Pancreas (tissue), 10 donors: ENCODE measurements at regions of chr1 and their contacts with region 1.

Region 1: GRCh38 chr1:156659994-156660751 is 17.0 kb downstream of the NES start:
- DNase-seq: peak; percentile 87 to 98 (median 94)
- ATAC-seq: peak; percentile 85 to 90 (median 89)
- H3K4me3 ChIP-seq: peak overlapping the region in 1 of 4 donors; percentile 17
- H3K27ac ChIP-seq: peak overlapping the region in 2 of 4 donors; percentile 39 to 62
- H3K4me1 ChIP-seq: peaks cover 5 to 24% (median 10%) of the 10 kb centered on the region in 3 donors
- H3K27me3 ChIP-seq: peaks cover 0 to 6% (median 0%) of the 10 kb centered on the region in 4 donors
- CTCF ChIP-seq: peak; percentile 95 to 97 (median 96)

Region 2: DNA sequence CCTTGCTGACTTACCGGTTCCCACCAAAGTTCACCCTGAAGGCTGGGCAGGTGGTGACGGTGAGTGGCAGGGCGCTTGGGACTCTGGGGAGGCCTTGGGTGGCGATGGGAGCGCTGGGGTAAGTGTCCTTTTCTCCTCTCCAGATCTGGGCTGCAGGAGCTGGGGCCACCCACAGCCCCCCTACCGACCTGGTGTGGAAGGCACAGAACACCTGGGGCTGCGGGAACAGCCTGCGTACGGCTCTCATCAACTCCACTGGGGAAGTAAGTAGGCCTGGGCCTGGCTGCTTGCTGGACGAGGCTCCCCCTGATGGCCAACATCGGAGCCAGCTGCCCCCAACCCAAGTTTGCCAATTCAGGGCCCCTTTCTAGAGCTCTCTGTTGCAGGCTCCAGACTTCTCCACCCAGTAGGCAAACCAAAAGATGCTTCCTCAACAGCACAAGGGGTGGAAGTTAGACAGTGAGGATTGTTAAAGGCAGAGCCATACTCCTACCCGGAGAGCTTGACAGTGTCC is 523.1 kb before region 1 on chr1:
- intact Hi-C with region 1: no loop called
- DNase-seq: no peak
- ATAC-seq: no peak
- H3K4me3 ChIP-seq: no peak overlapping the region
- H3K27ac ChIP-seq: no peak overlapping the region
- H3K4me1 ChIP-seq: no peaks in the 10 kb centered on the region
- H3K27me3 ChIP-seq: no peaks in the 10 kb centered on the region
- CTCF ChIP-seq: no peak

Region 3: GRCh38 chr1:156625436-156626078 is 34.6 kb before region 1 on chr1:
- intact Hi-C with region 1: loop called in 2 of 3 experiments (anchors 2 to 5 kb)
- DNase-seq: peak in 5 of 6 donors; percentile 21 to 88 (median 70)
- ATAC-seq: peak in 3 of 4 donors; percentile 73 to 78 (median 74)
- H3K4me3 ChIP-seq: peak overlapping the region in 1 of 4 donors; percentile 45
- H3K27ac ChIP-seq: no peak overlapping the region
- H3K4me1 ChIP-seq: peaks cover 4 to 14% (median 5%) of the 10 kb centered on the region in 3 donors
- H3K27me3 ChIP-seq: peaks cover 0 to 32% (median 6%) of the 10 kb centered on the region in 4 donors
- CTCF ChIP-seq: peak; percentile 50 to 75 (median 68)